ENCODE measurements at regions of chr21 and their contacts with region 1.

Region 1: DNA sequence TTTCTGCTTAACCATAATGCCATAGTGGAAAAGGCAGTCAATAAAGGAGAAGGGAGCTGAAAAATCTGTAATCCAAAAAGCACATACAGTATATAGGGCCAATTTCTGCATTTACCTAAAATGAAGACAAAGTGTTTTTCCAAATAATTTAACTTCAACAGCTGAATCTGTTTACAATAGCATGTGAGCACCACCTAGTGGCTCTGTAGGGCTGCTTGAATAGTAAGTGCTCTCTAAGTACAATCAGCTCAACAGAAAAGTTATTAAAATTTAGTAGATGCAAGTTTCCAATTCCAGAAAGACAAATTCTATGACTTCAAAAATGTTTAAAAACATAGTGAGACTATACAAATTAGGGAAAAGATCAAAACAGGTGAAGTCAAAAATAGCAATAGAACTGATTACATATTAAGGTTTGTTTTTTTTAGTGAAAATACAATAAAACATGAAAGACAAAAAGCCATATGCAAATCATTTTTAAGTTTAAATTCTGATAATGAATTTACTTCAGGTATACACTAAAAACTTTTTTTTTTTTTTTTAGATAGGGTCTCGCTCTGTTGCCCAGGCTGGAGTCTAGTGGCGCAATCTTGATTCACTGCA is 220.0 kb downstream of the SETD4 start:
- DNase-seq: no peak
- H3K4me3 ChIP-seq: no peak overlapping the region
- H3K27ac ChIP-seq: no peak overlapping the region
- H3K4me1 ChIP-seq: no peaks in the 10 kb centered on the region
- H3K27me3 ChIP-seq: no peaks in the 10 kb centered on the region
- CTCF ChIP-seq: peak in 2 of 3 experiments; percentile 59 to 67; a peak in 3 of 4 replicates
- EP300 ChIP-seq: no peak
- POLR2A ChIP-seq: no peak
- RAD21 ChIP-seq: peak; percentile 92 to 94

Region 2: GRCh38 chr21:35051287-35051818 is 788.9 kb before region 1 on chr21:
- CTCF ChIA-PET with region 1: interaction called, 16 read pairs
- POLR2A ChIA-PET with region 1: no interaction called
- DNase-seq: peak; percentile 58 to 79
- H3K4me3 ChIP-seq: no peak overlapping the region
- H3K27ac ChIP-seq: no peak overlapping the region
- H3K4me1 ChIP-seq: peaks cover 2 to 4% (median 2%) of the 10 kb centered on the region in 4 experiments; a peak in 2 of 7 replicates
- H3K27me3 ChIP-seq: peaks cover 0 to 2% (median 0%) of the 10 kb centered on the region in 4 experiments; a peak in 1 of 7 replicates
- CTCF ChIP-seq: peak; percentile 59 to 73 (median 72)
- EP300 ChIP-seq: no peak
- POLR2A ChIP-seq: no peak
- RAD21 ChIP-seq: peak; percentile 69 to 75

Region 3: GRCh38 chr21:35400233-35400957 is 439.9 kb before region 1 on chr21:
- CTCF ChIA-PET with region 1: interaction called, 13 read pairs
- POLR2A ChIA-PET with region 1: no interaction called
- DNase-seq: peak in 1 of 2 experiments; percentile 13
- H3K4me3 ChIP-seq: no peak overlapping the region
- H3K27ac ChIP-seq: no peak overlapping the region
- H3K4me1 ChIP-seq: peaks cover 2 to 9% (median 4%) of the 10 kb centered on the region in 4 experiments; a peak in 6 of 7 replicates
- H3K27me3 ChIP-seq: no peaks in the 10 kb centered on the region
- CTCF ChIP-seq: peak in 2 of 3 experiments; percentile 38 to 66; a peak in 2 of 4 replicates
- EP300 ChIP-seq: no peak
- POLR2A ChIP-seq: no peak
- RAD21 ChIP-seq: peak; percentile 81 to 83

Region 4: GRCh38 chr21:35792569-35793305 is 47.6 kb before region 1 on chr21:
- CTCF ChIA-PET with region 1: no interaction called
- POLR2A ChIA-PET with region 1: no interaction called
- DNase-seq: no peak
- H3K4me3 ChIP-seq: no peak overlapping the region
- H3K27ac ChIP-seq: no peak overlapping the region
- H3K4me1 ChIP-seq: no peaks in the 10 kb centered on the region
- H3K27me3 ChIP-seq: no peaks in the 10 kb centered on the region
- CTCF ChIP-seq: no peak
- EP300 ChIP-seq: no peak
- POLR2A ChIP-seq: no peak
- RAD21 ChIP-seq: no peak

Region 5: DNA sequence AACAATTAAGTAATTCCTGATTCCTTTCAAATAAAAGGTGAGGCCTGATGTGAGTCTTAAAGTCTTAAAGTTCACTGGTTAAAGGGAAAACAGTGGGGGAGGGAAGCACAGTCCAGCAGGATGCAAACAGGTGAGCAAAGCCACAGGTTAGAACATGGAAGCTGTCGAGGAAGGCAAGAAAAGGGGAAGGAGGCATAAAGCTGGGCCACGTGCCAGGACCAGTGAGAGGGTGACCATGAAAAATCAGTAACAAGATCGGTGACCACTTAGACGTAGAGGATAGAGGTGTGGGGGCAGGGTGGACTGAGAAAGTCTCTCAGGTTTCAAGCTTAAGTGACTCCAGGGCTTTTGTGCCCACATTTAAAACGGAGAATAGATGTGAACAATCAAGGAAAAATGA is 11.2 kb before region 1 on chr21:
- CTCF ChIA-PET with region 1: interaction called, 14 read pairs
- POLR2A ChIA-PET with region 1: no interaction called
- DNase-seq: no peak
- H3K4me3 ChIP-seq: no peak overlapping the region
- H3K27ac ChIP-seq: no peak overlapping the region
- H3K4me1 ChIP-seq: peaks cover 0 to 4% (median 2%) of the 10 kb centered on the region in 4 experiments; a peak in 1 of 7 replicates
- H3K27me3 ChIP-seq: no peaks in the 10 kb centered on the region
- CTCF ChIP-seq: no peak
- EP300 ChIP-seq: no peak
- POLR2A ChIP-seq: no peak
- RAD21 ChIP-seq: no peak

Region 6: DNA sequence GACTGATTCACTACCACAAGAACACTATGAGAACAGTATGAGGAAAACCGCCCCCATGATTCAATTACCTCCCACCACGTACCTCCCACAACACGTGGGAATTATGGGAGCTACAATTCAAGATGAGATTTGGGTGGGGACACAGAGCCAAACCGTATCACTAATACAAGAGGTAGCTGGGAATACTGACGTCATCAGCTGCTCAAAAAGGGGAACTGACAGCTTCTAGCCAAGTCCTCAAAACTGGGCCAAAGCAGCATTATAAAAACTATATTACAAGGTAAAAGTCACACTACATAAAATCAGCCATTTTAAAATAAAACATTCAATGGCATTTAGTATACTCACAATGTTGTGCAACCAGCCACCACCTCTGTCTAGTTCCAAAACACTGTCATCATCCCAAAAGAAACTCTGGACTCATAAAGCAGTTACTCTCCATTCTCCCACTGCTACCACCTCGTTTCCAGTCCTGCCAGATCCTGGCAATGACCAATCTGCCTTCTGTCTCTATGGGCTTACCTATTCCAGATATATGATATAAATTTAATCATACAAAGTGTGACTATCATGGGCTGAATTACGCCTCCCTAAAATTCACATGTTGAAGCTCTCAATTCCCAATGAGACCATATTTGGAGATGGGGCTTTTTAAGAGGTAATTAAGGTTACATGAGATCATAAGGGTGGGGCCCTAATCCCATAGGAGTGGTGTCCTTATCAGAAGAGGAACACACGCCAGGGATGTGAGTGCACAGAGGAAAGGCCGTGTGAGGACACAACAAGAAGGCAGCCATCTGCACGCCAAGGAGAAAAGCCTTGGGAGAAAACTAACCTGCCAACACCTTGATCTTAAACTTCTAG is 27.9 kb after region 1 on chr21:
- CTCF ChIA-PET with region 1: no interaction called
- POLR2A ChIA-PET with region 1: no interaction called
- DNase-seq: no peak
- H3K4me3 ChIP-seq: no peak overlapping the region
- H3K27ac ChIP-seq: no peak overlapping the region
- H3K4me1 ChIP-seq: no peaks in the 10 kb centered on the region
- H3K27me3 ChIP-seq: no peaks in the 10 kb centered on the region
- CTCF ChIP-seq: no peak
- EP300 ChIP-seq: no peak
- POLR2A ChIP-seq: no peak
- RAD21 ChIP-seq: no peak

Region 7: DNA sequence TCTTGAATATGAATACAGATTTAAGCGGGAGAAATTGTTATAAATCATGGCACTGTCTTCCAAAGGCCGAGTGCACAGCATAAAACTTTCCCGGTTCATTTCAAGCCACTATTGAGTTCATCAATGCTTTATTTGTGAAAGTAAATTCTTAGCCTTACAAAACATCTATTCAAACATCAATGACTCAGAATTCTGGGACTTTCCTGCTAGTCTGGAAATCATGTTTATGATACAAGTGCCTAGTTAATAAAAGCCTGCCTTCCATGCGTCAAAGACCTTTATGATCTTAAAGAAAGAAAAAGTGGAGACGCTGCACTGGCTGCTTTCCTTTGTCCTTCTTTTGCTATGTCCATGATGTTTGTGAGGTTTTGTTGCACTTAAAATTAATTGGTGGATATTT is 82.3 kb after region 1 on chr21:
- CTCF ChIA-PET with region 1: no interaction called
- POLR2A ChIA-PET with region 1: no interaction called
- DNase-seq: no peak
- H3K4me3 ChIP-seq: no peak overlapping the region
- H3K27ac ChIP-seq: no peak overlapping the region
- H3K4me1 ChIP-seq: no peaks in the 10 kb centered on the region
- H3K27me3 ChIP-seq: no peaks in the 10 kb centered on the region
- CTCF ChIP-seq: no peak
- EP300 ChIP-seq: no peak
- POLR2A ChIP-seq: no peak
- RAD21 ChIP-seq: no peak

Region 8: GRCh38 chr21:36028127-36029069 is 188.1 kb after region 1 on chr21:
- CTCF ChIA-PET with region 1: no interaction called
- POLR2A ChIA-PET with region 1: no interaction called
- DNase-seq: peak; percentile 50 to 85
- H3K4me3 ChIP-seq: no peak overlapping the region
- H3K27ac ChIP-seq: no peak overlapping the region
- H3K4me1 ChIP-seq: peaks cover 0 to 7% (median under 1%) of the 10 kb centered on the region in 4 experiments; a peak in 3 of 7 replicates
- H3K27me3 ChIP-seq: no peaks in the 10 kb centered on the region
- CTCF ChIP-seq: peak; percentile 93 to 96 (median 94)
- EP300 ChIP-seq: no peak
- POLR2A ChIP-seq: no peak
- RAD21 ChIP-seq: peak; percentile 99 to 100

Measured in H1 (cell line).